ENCODE measurements at regions of chr17 and their contacts with region 1.

Region 1: GRCh38 chr17:31604936-31605335 is 213.5 kb downstream of the RAB11FIP4 start:
- DNase-seq: no peak
- H3K4me3 ChIP-seq: no peak overlapping the region
- H3K27ac ChIP-seq: no peak overlapping the region
- H3K4me1 ChIP-seq: peaks cover 3% of the 10 kb centered on the region
- H3K27me3 ChIP-seq: no peaks in the 10 kb centered on the region
- CTCF ChIP-seq: no peak

Region 2: GRCh38 chr17:31570951-31571892 is 33.7 kb before region 1 on chr17:
- CTCF ChIA-PET with region 1: no interaction called
- dilution Hi-C with region 1: no loop called
- in situ Hi-C with region 1: no loop called
- intact Hi-C with region 1: no loop called
- DNase-seq: peak; percentile 68
- H3K4me3 ChIP-seq: no peak overlapping the region
- H3K27ac ChIP-seq: peak overlapping the region; percentile 49
- H3K4me1 ChIP-seq: peaks cover 11% of the 10 kb centered on the region
- H3K27me3 ChIP-seq: no peaks in the 10 kb centered on the region
- CTCF ChIP-seq: no peak

Region 3: DNA sequence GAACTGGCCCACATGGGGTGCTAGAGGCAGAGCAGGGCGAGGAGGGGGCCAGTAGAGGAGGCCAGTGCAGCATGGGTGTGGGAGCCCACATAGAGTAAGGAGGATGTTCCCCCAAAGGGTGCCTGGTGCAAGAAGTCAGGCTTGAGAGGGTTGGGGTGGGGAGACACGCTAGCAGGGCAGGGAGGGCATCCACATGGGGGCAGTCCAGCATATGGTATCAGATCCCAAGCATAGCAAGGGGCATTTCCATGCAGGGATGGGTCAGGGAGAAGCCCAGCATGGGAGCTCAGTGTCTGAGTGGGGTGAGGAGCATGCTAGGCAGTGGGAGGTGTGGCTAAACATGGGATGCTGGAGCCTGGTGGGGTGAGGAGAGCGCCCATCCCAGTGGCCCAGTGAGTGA is 40.4 kb after region 1 on chr17:
- CTCF ChIA-PET with region 1: no interaction called
- dilution Hi-C with region 1: loop called (anchors 5 kb)
- in situ Hi-C with region 1: no loop called
- intact Hi-C with region 1: no loop called
- DNase-seq: no peak
- H3K4me3 ChIP-seq: no peak overlapping the region
- H3K27ac ChIP-seq: no peak overlapping the region
- H3K4me1 ChIP-seq: no peaks in the 10 kb centered on the region
- H3K27me3 ChIP-seq: no peaks in the 10 kb centered on the region
- CTCF ChIP-seq: no peak

Measured in mammary epithelial cell (primary cell).